Astrocyte of the cerebellum (primary cell): ENCODE measurements at regions of chr5 and their contacts with region 1.

Region 1: GRCh38 chr5:170552621-170553115 is 48.8 kb downstream of the KCNIP1 start:
- DNase-seq: peak; percentile 92
- H3K4me3 ChIP-seq: no peak overlapping the region
- CTCF ChIP-seq: peak; percentile 27

Region 2: GRCh38 chr5:170466988-170467707 is 85.5 kb before region 1 on chr5:
- in situ Hi-C with region 1: loop called (anchors 25 kb)
- DNase-seq: peak; percentile 42
- H3K4me3 ChIP-seq: no peak overlapping the region
- CTCF ChIP-seq: no peak